Naive thymus-derived CD4-positive, alpha-beta T cell (primary cell): ENCODE measurements at regions of chr1 and their contacts with region 1.

Region 1: DNA sequence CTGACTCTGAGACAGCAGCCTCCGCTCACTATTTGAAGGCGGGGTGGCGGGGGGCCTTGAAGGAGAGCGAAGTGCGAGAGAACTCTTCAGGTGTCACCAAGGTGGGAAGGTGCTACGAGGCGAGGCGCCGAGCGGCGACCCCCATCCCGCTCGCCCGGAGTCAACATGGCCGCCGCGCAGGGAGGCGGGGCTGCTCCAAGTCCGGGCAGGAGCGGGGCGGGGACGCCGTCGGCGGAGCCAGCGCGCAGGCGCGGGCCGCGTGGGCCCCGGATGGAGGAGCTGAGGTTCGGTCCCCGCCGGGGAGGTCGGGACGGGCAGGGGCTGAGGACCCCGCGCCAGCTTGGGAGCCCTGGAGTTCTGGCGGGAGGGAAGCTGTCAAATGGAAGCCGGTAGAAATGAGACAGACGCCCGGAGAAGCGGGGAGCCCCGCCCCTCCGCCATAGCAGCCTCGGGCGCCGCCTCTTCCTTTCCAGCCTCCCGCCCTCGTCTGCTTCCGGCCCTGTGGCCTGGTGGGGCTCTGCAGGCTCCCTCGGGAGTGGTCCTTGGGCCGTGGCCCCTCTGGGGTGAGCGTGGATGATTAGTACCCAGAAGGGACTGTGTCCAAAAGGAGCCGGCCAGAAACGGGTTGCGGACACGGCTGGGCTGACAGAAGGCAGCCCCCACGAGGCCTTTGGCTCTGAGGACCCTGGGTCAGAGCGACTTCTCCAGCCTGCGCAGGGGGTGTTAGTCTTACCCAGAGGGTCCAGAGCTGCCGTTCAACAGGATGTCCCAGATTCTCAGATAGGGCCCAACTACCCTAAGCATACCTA is at the start of gene PIGV:
- DNase-seq: peak; percentile 81 to 95 (median 90)
- ATAC-seq: peak; percentile 84
- H3K4me3 ChIP-seq: peak within 1 kb of the TSS; percentile 91
- H3K4me3 Mint-ChIP-seq: peak within 1 kb of the TSS; percentile 81 to 99 (median 90)
- H3K27ac ChIP-seq: peak within 1 kb of the TSS; percentile 95
- H3K27ac Mint-ChIP-seq: peak within 1 kb of the TSS; percentile 87 to 100 (median 99)
- H3K4me1 ChIP-seq: peaks cover 41 to 42% of the 10 kb centered on the region in 2 donors
- H3K4me1 Mint-ChIP-seq: peaks cover 38 to 74% (median 69%) of the 10 kb centered on the region in 7 donors
- H3K27me3 ChIP-seq: no peaks in the 10 kb centered on the region
- H3K27me3 Mint-ChIP-seq: no peaks in the 10 kb centered on the region
- total RNA-seq, gene PIGV: 8.4 to 17.9 (median 16.7) TPM

Region 2: DNA sequence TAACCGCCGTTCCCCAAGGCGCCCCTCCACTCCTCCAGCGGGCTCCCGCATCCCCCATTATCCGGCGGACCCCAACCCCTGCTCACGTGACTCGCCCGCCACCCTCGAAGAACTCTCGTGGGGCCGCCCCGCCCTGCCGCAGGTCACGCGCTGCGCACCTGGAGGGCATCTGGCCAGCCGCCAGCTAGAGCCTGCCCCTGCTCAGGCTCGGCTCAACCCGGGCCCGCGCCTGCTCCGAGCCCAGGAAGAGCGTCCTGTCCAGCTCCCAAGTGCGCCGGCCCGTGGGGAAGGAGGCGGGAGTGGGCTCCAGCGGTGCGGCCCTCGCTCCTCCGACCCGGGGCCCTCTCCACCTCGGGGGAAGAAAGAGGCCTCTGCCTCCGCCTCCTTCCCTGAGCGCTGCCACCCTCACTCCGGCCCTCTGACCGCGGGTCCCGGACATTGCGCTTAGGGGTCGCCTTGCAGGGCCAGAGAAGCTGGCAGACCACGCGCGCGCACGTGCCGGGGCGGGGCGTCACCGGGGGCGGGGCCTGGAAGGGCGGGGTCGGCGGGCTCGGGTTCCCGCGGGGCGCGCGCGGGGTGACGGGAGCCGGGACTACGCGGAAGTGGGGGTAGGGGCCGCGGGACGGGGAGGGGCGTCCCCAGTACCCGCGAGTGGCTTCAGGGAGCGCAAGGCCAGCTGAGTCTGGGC is 287.3 kb before region 1 on chr1:
- CTCF ChIA-PET with region 1: interaction called, 15 read pairs
- POLR2A ChIA-PET with region 1: interaction called, 23 read pairs
- intact Hi-C with region 1: loop called (anchors 1 kb)
- DNase-seq: peak; percentile 76 to 97 (median 86)
- ATAC-seq: peak; percentile 89
- H3K4me3 ChIP-seq: peak overlapping the region; percentile 95
- H3K4me3 Mint-ChIP-seq: peak overlapping the region; percentile 67 to 91 (median 88)
- H3K27ac ChIP-seq: peak overlapping the region; percentile 90
- H3K27ac Mint-ChIP-seq: peak overlapping the region; percentile 67 to 95 (median 91)
- H3K4me1 ChIP-seq: peaks cover 16% of the 10 kb centered on the region in 2 donors
- H3K4me1 Mint-ChIP-seq: peaks cover 1 to 31% (median 11%) of the 10 kb centered on the region in 7 donors
- H3K27me3 ChIP-seq: no peaks in the 10 kb centered on the region
- H3K27me3 Mint-ChIP-seq: no peaks in the 10 kb centered on the region

Region 3: DNA sequence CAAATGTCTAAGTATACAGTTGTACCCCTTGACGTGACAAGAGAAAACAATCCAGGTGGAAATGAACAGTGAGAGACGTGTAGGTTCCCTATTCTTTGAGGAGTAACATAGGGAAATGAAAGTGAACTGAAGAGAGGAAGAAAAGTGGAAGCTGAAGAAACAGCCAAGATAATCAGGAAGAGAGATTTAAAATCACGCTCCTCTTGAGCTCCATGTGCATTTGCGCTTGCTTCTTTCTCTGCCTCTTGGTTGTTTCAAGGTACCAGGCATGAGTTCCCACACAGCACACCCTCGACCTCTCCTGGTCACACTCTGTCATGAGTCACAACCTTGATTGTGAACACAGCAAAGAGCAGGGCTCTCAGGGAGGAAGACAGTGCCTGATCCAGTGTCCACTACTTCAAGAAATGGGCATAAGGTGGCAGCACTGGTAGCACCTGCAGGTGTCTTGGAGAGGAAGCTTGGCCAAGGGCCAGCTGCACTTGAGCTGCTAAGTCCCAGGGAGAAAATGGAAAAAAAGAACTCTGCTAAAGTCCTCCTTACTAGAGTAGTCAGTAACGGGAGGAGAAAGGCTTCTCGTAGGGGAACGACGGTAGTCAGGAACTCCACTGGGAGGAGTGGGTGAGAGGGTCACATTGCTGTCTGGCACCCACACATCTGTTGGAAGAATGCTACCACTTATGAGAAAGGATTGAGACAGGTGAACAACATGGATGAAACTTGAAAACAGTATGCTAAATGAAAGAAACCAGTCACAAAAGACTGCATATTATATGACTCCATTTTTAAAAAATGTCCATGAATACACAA is 110.4 kb before region 1 on chr1:
- CTCF ChIA-PET with region 1: interaction called, 36 read pairs
- POLR2A ChIA-PET with region 1: interaction called, 16 read pairs
- intact Hi-C with region 1: loop called in 1 of 2 experiments (anchors 1 kb)
- DNase-seq: peak; percentile 23 to 62 (median 50)
- ATAC-seq: peak; percentile 96
- H3K4me3 ChIP-seq: no peak overlapping the region
- H3K4me3 Mint-ChIP-seq: peak overlapping the region; percentile 36 to 83 (median 67)
- H3K27ac ChIP-seq: no peak overlapping the region
- H3K27ac Mint-ChIP-seq: peak overlapping the region; percentile 6 to 89 (median 78)
- H3K4me1 ChIP-seq: peaks cover 0 to 13% of the 10 kb centered on the region in 2 donors
- H3K4me1 Mint-ChIP-seq: peaks cover 11 to 24% (median 17%) of the 10 kb centered on the region in 7 donors
- H3K27me3 ChIP-seq: no peaks in the 10 kb centered on the region
- H3K27me3 Mint-ChIP-seq: no peaks in the 10 kb centered on the region

Region 4: DNA sequence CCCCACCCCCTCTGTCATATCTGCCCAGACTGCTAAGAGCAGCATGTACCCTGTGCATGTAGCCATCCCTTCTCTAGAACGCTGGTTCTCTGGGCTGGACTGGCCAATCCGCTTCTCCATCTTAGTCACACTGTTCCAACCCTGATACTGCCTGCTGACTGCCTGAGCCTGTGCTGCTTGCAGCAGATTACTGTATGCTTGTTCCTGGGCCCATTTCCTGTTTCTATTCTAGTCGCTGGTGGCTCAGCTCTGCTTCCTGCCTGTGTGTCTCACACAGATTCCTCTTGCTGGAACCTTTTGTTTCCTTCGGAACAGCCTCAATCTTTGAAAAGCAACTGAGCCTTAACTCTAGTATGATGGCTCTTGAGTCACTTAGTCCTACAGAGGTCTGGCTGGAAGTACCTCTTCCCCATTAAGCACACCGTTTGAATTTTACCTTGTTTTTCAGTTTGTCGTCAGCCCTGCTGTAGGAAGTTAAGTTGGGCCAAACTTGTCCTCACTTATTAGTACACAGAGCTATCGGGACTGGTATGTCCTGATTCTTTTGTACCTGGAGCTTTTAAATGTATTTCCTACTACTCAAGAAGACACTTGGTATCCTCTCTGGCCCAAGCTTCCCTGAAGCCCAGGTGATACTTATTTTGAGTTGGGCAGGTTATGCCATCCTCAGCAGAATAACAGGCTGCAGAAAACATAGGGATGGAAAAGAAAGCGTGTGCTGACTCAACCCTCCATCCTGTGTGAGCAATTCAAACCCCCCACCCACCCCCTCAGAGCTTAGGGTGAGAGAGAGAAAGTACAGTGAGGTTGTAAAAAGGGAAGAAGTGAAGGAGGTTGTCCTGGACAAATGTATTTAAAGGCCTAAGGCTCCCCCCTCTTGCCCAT is 43.6 kb before region 1 on chr1:
- CTCF ChIA-PET with region 1: interaction called, 7 read pairs
- POLR2A ChIA-PET with region 1: interaction called, 17 read pairs
- intact Hi-C with region 1: loop called (anchors 1 kb)
- DNase-seq: peak; percentile 30 to 86 (median 79)
- ATAC-seq: peak; percentile 97
- H3K4me3 ChIP-seq: peak overlapping the region; percentile 39
- H3K4me3 Mint-ChIP-seq: peak overlapping the region; percentile 69 to 86 (median 77)
- H3K27ac ChIP-seq: peak overlapping the region; percentile 62
- H3K27ac Mint-ChIP-seq: peak overlapping the region; percentile 56 to 97 (median 90)
- H3K4me1 ChIP-seq: peaks cover 44 to 84% of the 10 kb centered on the region in 2 donors
- H3K4me1 Mint-ChIP-seq: peaks cover 59 to 96% (median 85%) of the 10 kb centered on the region in 7 donors
- H3K27me3 ChIP-seq: no peaks in the 10 kb centered on the region
- H3K27me3 Mint-ChIP-seq: no peaks in the 10 kb centered on the region

Region 5: DNA sequence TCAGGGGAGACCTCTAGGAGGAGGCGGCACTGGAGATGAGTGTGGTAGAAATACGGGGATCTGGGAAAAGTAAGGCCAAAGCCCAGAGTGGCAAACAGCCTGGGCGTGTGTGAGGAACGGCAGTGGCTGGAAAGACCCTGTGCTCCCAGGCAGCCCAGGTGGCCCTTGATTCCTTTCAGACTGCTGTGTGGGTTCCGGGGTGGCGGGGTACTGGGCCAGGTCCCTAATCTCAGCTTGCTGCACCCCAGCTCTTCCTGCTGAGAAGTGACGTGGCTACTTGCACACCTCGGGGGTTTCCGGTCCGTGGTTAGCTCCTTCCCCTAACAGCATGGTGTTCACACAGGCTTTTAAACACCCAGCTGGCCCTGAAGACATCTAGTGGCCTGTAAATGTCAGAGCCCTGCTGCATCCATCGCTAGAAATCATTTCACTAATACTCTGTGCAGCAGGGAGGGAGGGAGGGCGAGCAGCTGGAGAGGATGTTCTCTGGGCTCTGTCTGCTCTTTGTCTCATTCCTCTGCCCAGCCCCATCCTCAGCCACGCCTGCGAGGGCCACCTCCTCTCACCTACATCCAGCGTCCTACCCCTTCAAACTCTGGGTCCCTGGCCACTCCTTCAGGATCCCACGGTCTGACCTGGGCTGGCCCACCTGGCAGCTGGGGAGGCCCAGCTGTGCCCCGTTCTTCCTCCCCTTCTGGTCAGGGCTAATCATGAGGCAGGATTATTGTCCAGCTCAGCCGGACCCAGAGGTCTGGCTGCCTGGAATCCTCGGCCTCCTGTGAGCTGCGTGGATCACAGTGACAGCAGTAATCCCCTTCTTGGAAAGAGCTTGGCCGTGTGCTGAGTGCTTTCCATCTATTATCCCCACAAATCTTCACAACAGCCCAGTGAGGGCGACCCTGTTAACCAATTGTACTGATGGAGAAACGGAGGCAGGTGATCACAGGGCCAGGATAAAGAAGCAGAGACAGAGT is 45.8 kb after region 1 on chr1:
- CTCF ChIA-PET with region 1: interaction called, 13 read pairs
- POLR2A ChIA-PET with region 1: interaction called, 18 read pairs
- intact Hi-C with region 1: loop called (anchors 1 to 2 kb)
- DNase-seq: peak; percentile 59 to 95 (median 88)
- ATAC-seq: peak; percentile 97
- H3K4me3 ChIP-seq: peak overlapping the region; percentile 59
- H3K4me3 Mint-ChIP-seq: peak overlapping the region; percentile 69 to 87 (median 84)
- H3K27ac ChIP-seq: peak overlapping the region; percentile 99
- H3K27ac Mint-ChIP-seq: peak overlapping the region; percentile 95 to 100 (median 99)
- H3K4me1 ChIP-seq: peaks cover 49% of the 10 kb centered on the region in 2 donors
- H3K4me1 Mint-ChIP-seq: peaks cover 50 to 75% (median 64%) of the 10 kb centered on the region in 7 donors
- H3K27me3 ChIP-seq: no peaks in the 10 kb centered on the region
- H3K27me3 Mint-ChIP-seq: no peaks in the 10 kb centered on the region

Region 6: DNA sequence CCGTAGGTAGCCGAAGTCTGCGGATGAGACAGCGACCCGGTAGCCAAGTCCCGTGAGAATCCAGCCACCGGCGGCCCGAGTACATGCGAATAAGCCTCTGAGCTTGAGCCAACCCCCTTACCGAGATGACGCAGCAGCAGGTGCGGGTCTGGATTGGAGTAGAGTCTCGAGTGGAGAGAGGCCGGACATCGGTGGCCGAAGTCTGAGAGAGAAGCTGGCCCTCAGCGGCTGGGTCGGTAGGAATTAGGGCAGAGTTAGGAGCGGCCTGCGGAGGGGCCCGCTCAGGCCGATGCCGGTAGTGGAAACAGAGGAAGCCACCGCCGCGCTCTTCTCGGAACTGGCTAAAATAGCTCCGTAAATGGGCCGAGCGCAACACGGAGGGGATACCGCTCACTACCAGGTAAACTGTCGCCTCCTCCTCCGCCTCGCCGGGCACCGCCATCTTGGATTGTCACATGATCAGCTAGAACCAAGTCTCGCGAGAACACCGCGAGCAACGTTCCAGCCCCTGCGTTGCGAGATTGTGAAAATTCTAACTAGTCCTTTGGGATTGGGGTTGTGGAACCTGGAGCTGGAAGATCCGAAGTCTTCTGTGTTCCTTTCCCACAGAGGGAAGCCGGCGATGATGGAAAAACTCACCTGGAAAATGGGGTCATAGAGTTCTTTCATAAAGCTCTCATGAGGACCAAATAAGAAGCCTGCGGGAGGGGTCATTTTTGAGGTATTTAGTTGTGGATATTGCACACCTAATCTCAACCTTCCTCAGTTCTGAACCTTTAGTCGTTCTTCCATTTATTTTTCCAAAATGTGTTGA is 112.3 kb after region 1 on chr1 and contains the start of gene GPATCH3:
- CTCF ChIA-PET with region 1: no interaction called
- POLR2A ChIA-PET with region 1: interaction called, 17 read pairs
- intact Hi-C with region 1: no loop called
- DNase-seq: peak; percentile 68 to 89 (median 86)
- ATAC-seq: peak; percentile 93
- H3K4me3 ChIP-seq: peak within 1 kb of the TSS; percentile 94
- H3K4me3 Mint-ChIP-seq: peak within 1 kb of the TSS; percentile 87 to 99 (median 96)
- H3K27ac ChIP-seq: peak within 1 kb of the TSS; percentile 90
- H3K27ac Mint-ChIP-seq: peak within 1 kb of the TSS; percentile 94 to 100 (median 99)
- H3K4me1 ChIP-seq: peaks cover 10 to 16% of the 10 kb centered on the region in 2 donors
- H3K4me1 Mint-ChIP-seq: peaks cover 24 to 46% (median 39%) of the 10 kb centered on the region in 7 donors
- H3K27me3 ChIP-seq: no peaks in the 10 kb centered on the region
- H3K27me3 Mint-ChIP-seq: no peaks in the 10 kb centered on the region
- total RNA-seq, gene GPATCH3: 17.0 to 38.4 (median 22.6) TPM

Region 7: DNA sequence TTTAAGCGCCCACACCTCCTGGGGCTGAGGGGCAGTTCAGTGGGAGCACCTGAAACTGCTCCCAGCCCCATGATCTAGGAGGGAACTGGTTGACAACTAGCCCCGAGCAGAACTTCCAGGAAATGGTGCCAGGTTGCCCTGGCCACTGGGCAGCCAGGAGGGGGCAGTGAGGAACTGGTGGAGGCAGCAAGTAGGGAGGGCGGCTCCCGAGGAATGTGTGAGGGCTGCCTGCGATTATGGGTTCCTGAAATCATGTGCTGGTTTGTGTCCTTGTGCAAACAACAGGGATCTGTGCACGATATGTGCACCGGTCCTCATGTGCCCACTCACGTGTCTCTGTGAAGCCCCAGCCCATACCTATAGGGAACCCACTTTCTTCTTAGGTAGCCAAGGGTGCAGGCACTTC is 614.4 kb after region 1 on chr1:
- CTCF ChIA-PET with region 1: no interaction called
- POLR2A ChIA-PET with region 1: no interaction called
- intact Hi-C with region 1: no loop called
- DNase-seq: no peak
- ATAC-seq: peak; percentile 44
- H3K4me3 ChIP-seq: no peak overlapping the region
- H3K4me3 Mint-ChIP-seq: no peak overlapping the region
- H3K27ac ChIP-seq: peak overlapping the region; percentile 48
- H3K27ac Mint-ChIP-seq: peak overlapping the region in 7 of 9 donors; percentile 36 to 95 (median 87)
- H3K4me1 ChIP-seq: peaks cover 0 to 17% of the 10 kb centered on the region in 2 donors
- H3K4me1 Mint-ChIP-seq: peaks cover 10 to 40% (median 33%) of the 10 kb centered on the region in 7 donors
- H3K27me3 ChIP-seq: no peaks in the 10 kb centered on the region
- H3K27me3 Mint-ChIP-seq: no peaks in the 10 kb centered on the region